CD8-positive, alpha-beta T cell (primary cell): ENCODE measurements at regions of chr3 and their contacts with region 1.

Region 1: GRCh38 chr3:152444029-152444641 is 175.4 kb downstream of the MBNL1 start:
- DNase-seq: peak in 2 of 9 experiments; percentile 53 to 70
- ATAC-seq: peak; percentile 46
- H3K4me3 ChIP-seq: no peak overlapping the region
- H3K4me3 Mint-ChIP-seq: peak overlapping the region; percentile 0
- H3K27ac ChIP-seq: no peak overlapping the region
- H3K27ac Mint-ChIP-seq: peak overlapping the region; percentile 55
- H3K4me1 ChIP-seq: peaks cover 55% of the 10 kb centered on the region
- H3K4me1 Mint-ChIP-seq: peaks cover 73% of the 10 kb centered on the region
- H3K27me3 ChIP-seq: no peaks in the 10 kb centered on the region
- H3K27me3 Mint-ChIP-seq: no peaks in the 10 kb centered on the region
- CTCF ChIP-seq: peak; percentile 68

Region 2: GRCh38 chr3:152466784-152467183 is 22.6 kb after region 1 on chr3:
- CTCF ChIA-PET with region 1: interaction called, 6 read pairs
- POLR2A ChIA-PET with region 1: interaction called, 4 read pairs
- intact Hi-C with region 1: loop called in 1 of 2 experiments (anchors 2 kb)
- DNase-seq: peak in 2 of 9 experiments; percentile 39 to 56
- ATAC-seq: peak; percentile 77
- H3K4me3 ChIP-seq: no peak overlapping the region
- H3K4me3 Mint-ChIP-seq: no peak overlapping the region
- H3K27ac ChIP-seq: no peak overlapping the region
- H3K27ac Mint-ChIP-seq: peak overlapping the region; percentile 66
- H3K4me1 ChIP-seq: peaks cover 2% of the 10 kb centered on the region
- H3K4me1 Mint-ChIP-seq: peaks cover 11% of the 10 kb centered on the region
- H3K27me3 ChIP-seq: no peaks in the 10 kb centered on the region
- H3K27me3 Mint-ChIP-seq: no peaks in the 10 kb centered on the region
- CTCF ChIP-seq: peak; percentile 77